ENCODE measurements at regions of chr9 and their contacts with region 1.

Region 1: GRCh38 chr9:72384710-72385485 is 19.9 kb upstream of the ZFAND5 start:
- DNase-seq: no peak
- H3K4me3 ChIP-seq: no peak overlapping the region
- CTCF ChIP-seq: no peak

Region 2: DNA sequence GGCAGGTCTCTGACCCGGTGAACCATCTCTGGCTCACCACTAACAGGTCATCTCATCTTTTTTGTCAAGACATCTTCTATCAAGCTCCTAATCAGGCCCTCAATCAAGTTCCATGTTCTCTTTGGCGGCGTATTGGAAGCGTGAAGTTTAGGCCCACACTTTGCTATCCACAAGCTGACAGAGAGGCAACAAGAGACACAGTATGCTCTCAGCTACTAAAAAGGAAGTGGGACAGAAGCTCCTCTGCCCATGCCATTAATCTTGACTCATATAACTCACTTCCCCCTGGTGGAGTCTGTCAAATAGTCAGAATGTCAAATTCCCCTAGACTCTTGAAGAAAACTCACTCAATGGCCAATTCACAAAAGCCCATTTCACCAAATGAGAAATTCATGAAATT is 59.0 kb after region 1 on chr9:
- in situ Hi-C with region 1: loop called (anchors 5 kb)
- DNase-seq: no peak
- H3K4me3 ChIP-seq: no peak overlapping the region
- CTCF ChIP-seq: no peak

Measured in astrocyte of the cerebellum (primary cell).